ENCODE measurements at regions of chr16 and their contacts with region 1.

Region 1: GRCh38 chr16:30005341-30006094 is 5.3 kb downstream of the DOC2A start:
- DNase-seq: peak; percentile 59 to 90
- ATAC-seq: peak; percentile 54 to 78; a peak in 5 of 6 replicates
- H3K4me3 ChIP-seq: no peak overlapping the region
- H3K27ac ChIP-seq: peak overlapping the region in 1 of 2 experiments; percentile 38; a peak in 3 of 6 replicates
- H3K4me1 ChIP-seq: peaks cover 10% of the 10 kb centered on the region; the same call in 2 of the 3 replicates
- CTCF ChIP-seq: peak; percentile 78
- EP300 ChIP-seq: no peak
- POLR2A ChIP-seq: no peak
- RAD21 ChIP-seq: peak; percentile 64 to 71

Region 2: DNA sequence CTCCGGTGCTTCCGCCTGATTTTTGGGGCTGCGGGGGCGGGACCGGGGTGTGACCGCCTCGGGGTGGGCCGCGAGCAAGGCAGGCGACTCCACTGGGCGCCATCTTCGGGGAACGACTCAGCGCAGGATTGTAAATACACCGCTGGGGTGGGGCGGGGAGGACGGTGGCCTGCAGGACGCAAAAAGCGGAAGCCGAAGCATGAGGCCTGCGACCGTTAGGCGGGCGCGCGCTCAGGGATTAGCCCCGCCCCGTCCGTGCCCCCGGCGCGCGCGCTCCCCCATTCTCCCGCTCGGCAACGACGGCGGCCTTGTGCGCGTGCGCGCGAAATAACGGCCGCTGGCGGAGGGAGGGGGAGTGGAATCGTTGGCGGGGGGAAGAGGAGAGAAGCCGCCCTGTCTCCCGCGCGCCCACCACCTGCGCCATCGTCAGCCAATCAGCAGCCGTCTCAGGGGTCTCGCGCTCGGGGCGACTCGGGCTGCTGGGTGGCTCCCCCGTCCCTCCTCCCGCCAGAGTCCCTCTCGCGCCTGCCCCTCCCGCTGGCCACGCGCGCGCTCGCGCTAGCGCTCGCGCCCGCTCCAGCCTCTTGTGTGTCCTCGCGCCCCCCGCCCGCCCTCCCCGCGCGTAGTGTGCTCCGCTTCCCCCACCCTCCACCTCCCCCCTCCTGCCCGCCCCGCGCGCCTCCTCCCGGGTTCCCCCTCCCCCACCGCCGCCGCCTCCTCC is 200.0 kb before region 1 on chr16:
- CTCF ChIA-PET with region 1: interaction called, 11 read pairs
- POLR2A ChIA-PET with region 1: no interaction called
- DNase-seq: peak; percentile 84 to 98
- ATAC-seq: peak; percentile 44 to 80
- H3K4me3 ChIP-seq: peak overlapping the region; percentile 55
- H3K27ac ChIP-seq: peak overlapping the region; percentile 98 to 99
- H3K4me1 ChIP-seq: peaks cover 38% of the 10 kb centered on the region
- CTCF ChIP-seq: no peak
- EP300 ChIP-seq: peak in 1 of 2 experiments; percentile 49; a peak in 1 of 5 replicates
- POLR2A ChIP-seq: peak; percentile 57
- RAD21 ChIP-seq: peak in 1 of 2 experiments; percentile 3; a peak in 1 of 5 replicates

Region 3: GRCh38 chr16:29900102-29900887 is 105.2 kb before region 1 on chr16 and contains the start of gene ASPHD1:
- CTCF ChIA-PET with region 1: interaction called, 41 read pairs
- POLR2A ChIA-PET with region 1: interaction called, 3 read pairs
- DNase-seq: peak; percentile 77 to 87
- ATAC-seq: peak; percentile 73 to 79
- H3K4me3 ChIP-seq: peak within 1 kb of the TSS; percentile 68
- H3K27ac ChIP-seq: peak within 1 kb of the TSS; percentile 80 to 88
- H3K4me1 ChIP-seq: peaks cover 16% of the 10 kb centered on the region
- CTCF ChIP-seq: no peak
- EP300 ChIP-seq: no peak
- POLR2A ChIP-seq: no peak; the same call in 1 of the 2 replicates
- RAD21 ChIP-seq: no peak
- polyA plus RNA-seq, gene ASPHD1: 3.7 and 4.6 TPM in 2 replicates

Region 4: GRCh38 chr16:29943846-29944669 is 61.5 kb before region 1 on chr16:
- CTCF ChIA-PET with region 1: interaction called, 12 read pairs
- POLR2A ChIA-PET with region 1: interaction called, 7 read pairs
- DNase-seq: peak; percentile 85 to 99
- ATAC-seq: peak; percentile 98 to 99
- H3K4me3 ChIP-seq: peak overlapping the region; percentile 14
- H3K27ac ChIP-seq: peak overlapping the region; percentile 92 to 94
- H3K4me1 ChIP-seq: peaks cover 26% of the 10 kb centered on the region
- CTCF ChIP-seq: peak; percentile 64
- EP300 ChIP-seq: no peak; a peak in 1 of 5 replicates
- POLR2A ChIP-seq: peak; percentile 31
- RAD21 ChIP-seq: peak; percentile 47 to 56

Region 5: GRCh38 chr16:29973384-29974246 is 31.9 kb before region 1 on chr16 and contains the start of gene TAOK2:
- CTCF ChIA-PET with region 1: interaction called, 10 read pairs
- POLR2A ChIA-PET with region 1: no interaction called
- DNase-seq: peak; percentile 99 to 100
- ATAC-seq: peak; percentile 91 to 98
- H3K4me3 ChIP-seq: peak within 1 kb of the TSS; percentile 67
- H3K27ac ChIP-seq: peak within 1 kb of the TSS; percentile 90 to 98
- H3K4me1 ChIP-seq: peaks cover 19% of the 10 kb centered on the region
- CTCF ChIP-seq: no peak
- EP300 ChIP-seq: no peak
- POLR2A ChIP-seq: peak; percentile 96
- RAD21 ChIP-seq: peak in 1 of 2 experiments; percentile 16; a peak in 1 of 5 replicates
- polyA plus RNA-seq, gene TAOK2: 13.7 TPM in 2 replicates

Region 6: DNA sequence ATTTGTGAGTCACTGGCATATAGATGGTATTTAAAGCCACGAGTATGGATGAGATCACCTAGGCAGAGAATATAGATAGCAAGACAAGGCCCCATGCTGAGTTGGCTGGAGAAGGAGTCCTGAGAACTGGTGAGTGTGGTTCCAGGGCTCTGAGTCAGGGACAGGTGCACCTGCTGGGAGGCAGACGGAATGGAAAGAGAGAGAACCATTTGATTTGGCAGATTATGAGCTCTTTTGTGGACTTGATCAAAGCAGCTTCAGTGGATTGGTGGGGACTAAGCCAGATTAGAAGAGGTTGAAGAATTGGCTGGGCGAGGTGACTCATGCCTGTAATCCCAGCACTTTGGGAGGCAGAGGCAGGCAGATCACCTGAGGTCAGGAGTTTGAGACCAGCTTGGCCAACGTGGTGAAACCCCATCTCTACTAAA is 13.2 kb after region 1 on chr16:
- CTCF ChIA-PET with region 1: interaction called, 16 read pairs
- POLR2A ChIA-PET with region 1: no interaction called
- DNase-seq: no peak
- ATAC-seq: no peak
- H3K4me3 ChIP-seq: no peak overlapping the region
- H3K27ac ChIP-seq: no peak overlapping the region
- H3K4me1 ChIP-seq: no peaks in the 10 kb centered on the region
- CTCF ChIP-seq: no peak
- EP300 ChIP-seq: no peak
- POLR2A ChIP-seq: no peak
- RAD21 ChIP-seq: no peak

Region 7: GRCh38 chr16:30065143-30065850 is 59.8 kb after region 1 on chr16 and contains the start of gene ALDOA:
- CTCF ChIA-PET with region 1: no interaction called
- POLR2A ChIA-PET with region 1: no interaction called
- DNase-seq: peak; percentile 86 to 98
- ATAC-seq: peak; percentile 78 to 89
- H3K4me3 ChIP-seq: peak within 1 kb of the TSS; percentile 73
- H3K27ac ChIP-seq: peak within 1 kb of the TSS; percentile 96 to 97
- H3K4me1 ChIP-seq: peaks cover 34% of the 10 kb centered on the region
- CTCF ChIP-seq: no peak
- EP300 ChIP-seq: 0 out of 5 replicates have a peak, but pooled peaks of 1 of the 2 experiments have one; percentile 13
- POLR2A ChIP-seq: peak; percentile 95
- RAD21 ChIP-seq: no peak
- polyA plus RNA-seq, gene ALDOA: 741 and 761 TPM in 2 replicates

Measured in A549 (cell line).